PC-9 (cell line): ENCODE measurements at regions of chr9 and their contacts with region 1.

Region 1: DNA sequence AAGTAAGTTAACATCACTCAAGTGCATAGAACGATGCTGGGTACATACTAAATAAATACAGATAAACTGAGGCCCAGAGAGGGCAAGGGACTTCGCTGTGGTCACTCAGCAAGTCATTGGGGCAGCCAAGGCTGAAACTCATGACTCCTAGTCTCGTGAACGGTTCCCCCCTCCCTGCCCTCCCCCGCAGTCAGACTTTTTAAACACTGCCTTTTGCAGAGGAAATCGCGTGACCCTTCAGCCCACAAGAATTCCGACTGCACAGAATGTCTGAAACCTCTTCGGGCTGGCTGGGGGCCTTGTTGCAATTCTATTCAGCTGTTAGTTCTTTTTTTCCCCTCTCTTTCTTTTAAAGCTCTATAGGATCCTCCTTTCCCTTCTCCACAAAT is 28.1 kb downstream of the NEK6 start:
- DNase-seq: no peak
- H3K4me3 ChIP-seq: no peak overlapping the region
- H3K27ac ChIP-seq: no peak overlapping the region
- H3K4me1 ChIP-seq: no peaks in the 10 kb centered on the region
- H3K27me3 ChIP-seq: no peaks in the 10 kb centered on the region
- CTCF ChIP-seq: no peak

Region 2: DNA sequence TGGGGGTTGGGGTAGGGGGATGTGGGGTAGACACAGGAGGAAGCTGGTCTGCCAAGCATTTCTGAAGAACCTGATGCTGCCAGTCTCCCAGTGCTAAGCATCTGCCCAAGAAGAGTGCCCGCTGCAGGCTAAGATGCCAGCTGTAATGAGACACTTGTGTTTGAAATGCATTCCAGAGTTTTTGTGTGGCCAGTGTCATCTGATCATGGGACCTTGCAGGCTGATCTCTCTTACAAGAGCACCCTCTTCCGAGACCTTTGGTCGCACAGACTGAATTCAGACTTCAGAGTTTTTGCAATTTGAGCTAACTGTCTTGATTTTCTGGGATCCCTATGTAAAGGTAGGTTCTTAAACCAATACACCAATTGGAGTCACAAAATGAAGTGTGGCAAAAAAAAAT is 414.1 kb before region 1 on chr9:
- CTCF ChIA-PET with region 1: no interaction called
- POLR2A ChIA-PET with region 1: no interaction called
- intact Hi-C with region 1: no loop called
- DNase-seq: no peak
- H3K4me3 ChIP-seq: no peak overlapping the region
- H3K27ac ChIP-seq: no peak overlapping the region
- H3K4me1 ChIP-seq: no peaks in the 10 kb centered on the region
- H3K27me3 ChIP-seq: no peaks in the 10 kb centered on the region
- CTCF ChIP-seq: no peak

Region 3: GRCh38 chr9:124267271-124267807 is 18.6 kb before region 1 on chr9:
- CTCF ChIA-PET with region 1: no interaction called
- POLR2A ChIA-PET with region 1: interaction called, 10 read pairs
- intact Hi-C with region 1: no loop called
- DNase-seq: peak in 1 of 2 experiments; percentile 88
- H3K4me3 ChIP-seq: no peak overlapping the region
- H3K27ac ChIP-seq: no peak overlapping the region
- H3K4me1 ChIP-seq: no peaks in the 10 kb centered on the region
- H3K27me3 ChIP-seq: no peaks in the 10 kb centered on the region
- CTCF ChIP-seq: no peak